ENCODE measurements at regions of chr12 and their contacts with region 1.

Region 1: GRCh38 chr12:115983226-115983798 is 294.2 kb downstream of the MED13L start:
- DNase-seq: peak; percentile 25 to 75
- H3K4me3 ChIP-seq: no peak overlapping the region
- H3K27ac ChIP-seq: no peak overlapping the region
- H3K4me1 ChIP-seq: peaks cover 2 to 7% (median 6%) of the 10 kb centered on the region in 4 experiments; a peak in 4 of 7 replicates
- H3K27me3 ChIP-seq: no peaks in the 10 kb centered on the region
- CTCF ChIP-seq: peak; percentile 76 to 90 (median 81)
- EP300 ChIP-seq: no peak
- POLR2A ChIP-seq: no peak
- RAD21 ChIP-seq: peak; percentile 86 to 87

Region 2: DNA sequence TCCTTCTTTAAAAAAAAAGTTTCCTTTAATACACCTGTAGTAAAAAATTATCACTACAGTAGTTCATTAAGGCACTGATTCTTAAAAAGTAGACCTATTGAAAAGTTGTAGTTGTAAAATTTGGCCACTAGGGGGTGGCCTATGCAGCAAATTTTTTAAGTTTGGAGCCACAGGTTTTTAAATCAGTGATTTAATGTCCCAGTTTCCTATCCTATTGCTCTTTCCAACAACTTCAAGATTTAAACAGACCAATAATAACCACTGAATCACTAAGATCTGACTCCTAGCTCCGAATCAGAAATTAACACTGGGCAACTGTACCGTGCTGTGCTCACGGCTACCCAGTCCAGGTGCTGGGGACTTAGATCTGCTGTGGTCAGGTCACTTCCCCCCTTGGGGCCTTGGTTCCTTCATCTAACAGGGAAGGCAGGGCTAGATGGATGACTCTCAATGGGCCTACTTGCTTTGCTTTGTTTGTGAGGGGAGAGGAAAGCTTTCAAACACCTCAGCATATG is 14.9 kb after region 1 on chr12:
- CTCF ChIA-PET with region 1: interaction called, 28 read pairs
- POLR2A ChIA-PET with region 1: no interaction called
- DNase-seq: peak; percentile 13 to 61
- H3K4me3 ChIP-seq: no peak overlapping the region
- H3K27ac ChIP-seq: no peak overlapping the region
- H3K4me1 ChIP-seq: peaks cover 0 to 4% (median under 1%) of the 10 kb centered on the region in 4 experiments; a peak in 1 of 7 replicates
- H3K27me3 ChIP-seq: no peaks in the 10 kb centered on the region
- CTCF ChIP-seq: peak in 2 of 3 experiments; percentile 32 to 43; a peak in 2 of 4 replicates
- EP300 ChIP-seq: no peak
- POLR2A ChIP-seq: no peak
- RAD21 ChIP-seq: peak; percentile 61 to 64

Region 3: GRCh38 chr12:116236148-116236731 is 252.9 kb after region 1 on chr12:
- CTCF ChIA-PET with region 1: interaction called, 13 read pairs
- POLR2A ChIA-PET with region 1: no interaction called
- DNase-seq: no peak
- H3K4me3 ChIP-seq: no peak overlapping the region
- H3K27ac ChIP-seq: no peak overlapping the region
- H3K4me1 ChIP-seq: no peaks in the 10 kb centered on the region
- H3K27me3 ChIP-seq: no peaks in the 10 kb centered on the region
- CTCF ChIP-seq: peak in 2 of 3 experiments; percentile 64 to 76; a peak in 3 of 4 replicates
- EP300 ChIP-seq: no peak
- POLR2A ChIP-seq: no peak
- RAD21 ChIP-seq: peak; percentile 74 to 84